ENCODE measurements at regions of chr2 and their contacts with region 1.

Region 1: GRCh38 chr2:152421521-152422370 is 86.8 kb downstream of the FMNL2 start:
- DNase-seq: no peak
- ATAC-seq: peak; percentile 84 to 94 (median 91)
- H3K4me3 ChIP-seq: no peak overlapping the region
- H3K27ac ChIP-seq: peak overlapping the region; percentile 77
- H3K4me1 ChIP-seq: peaks cover 62% of the 10 kb centered on the region
- H3K27me3 ChIP-seq: no peaks in the 10 kb centered on the region
- CTCF ChIP-seq: no peak

Region 2: GRCh38 chr2:152189622-152190495 is 231.9 kb before region 1 on chr2:
- intact Hi-C with region 1: loop called (anchors 5 to 10 kb)
- DNase-seq: no peak
- ATAC-seq: peak; percentile 78 to 95 (median 88)
- H3K4me3 ChIP-seq: no peak overlapping the region
- H3K27ac ChIP-seq: no peak overlapping the region
- H3K4me1 ChIP-seq: no peaks in the 10 kb centered on the region
- H3K27me3 ChIP-seq: no peaks in the 10 kb centered on the region
- CTCF ChIP-seq: peak; percentile 89

Region 3: GRCh38 chr2:152200562-152201465 is 220.9 kb before region 1 on chr2:
- intact Hi-C with region 1: no loop called
- DNase-seq: peak; percentile 92 to 93
- ATAC-seq: peak; percentile 99 to 100 (median 100)
- H3K4me3 ChIP-seq: no peak overlapping the region
- H3K27ac ChIP-seq: no peak overlapping the region
- H3K4me1 ChIP-seq: no peaks in the 10 kb centered on the region
- H3K27me3 ChIP-seq: no peaks in the 10 kb centered on the region
- CTCF ChIP-seq: no peak

Region 4: GRCh38 chr2:152347076-152347475 is 74.7 kb before region 1 on chr2:
- intact Hi-C with region 1: loop called in 1 of 2 experiments (anchors 10 kb)
- DNase-seq: no peak
- ATAC-seq: peak in 3 of 4 donors; percentile 40 to 58 (median 57)
- H3K4me3 ChIP-seq: no peak overlapping the region
- H3K27ac ChIP-seq: no peak overlapping the region
- H3K4me1 ChIP-seq: peaks cover 16% of the 10 kb centered on the region
- H3K27me3 ChIP-seq: no peaks in the 10 kb centered on the region
- CTCF ChIP-seq: no peak

Region 5: GRCh38 chr2:152456262-152456661 is 34.5 kb after region 1 on chr2:
- intact Hi-C with region 1: no loop called
- DNase-seq: no peak
- ATAC-seq: no peak
- H3K4me3 ChIP-seq: no peak overlapping the region
- H3K27ac ChIP-seq: no peak overlapping the region
- H3K4me1 ChIP-seq: peaks cover 10% of the 10 kb centered on the region
- H3K27me3 ChIP-seq: no peaks in the 10 kb centered on the region
- CTCF ChIP-seq: no peak

Measured in psoas muscle (tissue), 8 donors.